ENCODE measurements at regions of chr4 and their contacts with region 1.

Region 1: GRCh38 chr4:141759796-141760425 is 123.5 kb downstream of the IL15 start:
- DNase-seq: peak; percentile 67
- H3K4me3 ChIP-seq: no peak overlapping the region
- H3K27ac ChIP-seq: peak overlapping the region; percentile 81
- H3K4me1 ChIP-seq: peaks cover 36% of the 10 kb centered on the region
- H3K27me3 ChIP-seq: no peaks in the 10 kb centered on the region
- CTCF ChIP-seq: no peak
- POLR2A ChIP-seq: no peak

Region 2: DNA sequence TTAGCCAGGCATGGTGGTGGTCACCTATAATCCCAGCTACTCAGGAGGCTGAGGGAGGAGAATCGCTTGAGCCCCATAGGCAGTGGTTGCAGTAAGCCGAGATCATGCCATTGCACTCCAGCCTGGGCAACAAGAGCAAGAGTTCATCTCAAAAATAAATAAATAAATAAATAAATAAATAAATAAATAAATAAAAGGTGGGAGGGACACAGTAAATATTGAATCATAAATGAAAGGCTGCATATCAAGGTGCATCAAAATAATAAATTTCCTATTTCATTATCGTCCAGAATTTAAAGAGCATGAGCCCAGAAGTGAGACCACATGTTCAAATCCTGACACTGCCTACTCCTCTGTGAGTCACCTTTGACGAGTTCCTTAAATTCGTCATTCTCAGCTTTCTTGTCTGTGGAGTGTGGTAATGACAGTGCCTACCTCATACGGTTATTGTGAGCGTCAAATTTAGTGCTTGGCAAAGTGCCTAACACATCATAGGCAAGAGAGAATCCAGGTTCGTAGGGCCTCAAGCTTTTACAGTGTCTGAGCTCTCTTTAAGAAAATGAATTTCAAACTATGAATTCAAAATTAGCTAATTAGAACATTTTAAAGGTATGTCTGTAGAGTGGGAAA is 73.7 kb before region 1 on chr4:
- CTCF ChIA-PET with region 1: no interaction called
- POLR2A ChIA-PET with region 1: no interaction called
- dilution Hi-C with region 1: no loop called
- intact Hi-C with region 1: loop called (anchors 5 kb)
- DNase-seq: peak; percentile 70
- H3K4me3 ChIP-seq: no peak overlapping the region
- H3K27ac ChIP-seq: peak overlapping the region; percentile 57
- H3K4me1 ChIP-seq: peaks cover 23% of the 10 kb centered on the region
- H3K27me3 ChIP-seq: no peaks in the 10 kb centered on the region
- CTCF ChIP-seq: no peak
- POLR2A ChIP-seq: no peak

Region 3: DNA sequence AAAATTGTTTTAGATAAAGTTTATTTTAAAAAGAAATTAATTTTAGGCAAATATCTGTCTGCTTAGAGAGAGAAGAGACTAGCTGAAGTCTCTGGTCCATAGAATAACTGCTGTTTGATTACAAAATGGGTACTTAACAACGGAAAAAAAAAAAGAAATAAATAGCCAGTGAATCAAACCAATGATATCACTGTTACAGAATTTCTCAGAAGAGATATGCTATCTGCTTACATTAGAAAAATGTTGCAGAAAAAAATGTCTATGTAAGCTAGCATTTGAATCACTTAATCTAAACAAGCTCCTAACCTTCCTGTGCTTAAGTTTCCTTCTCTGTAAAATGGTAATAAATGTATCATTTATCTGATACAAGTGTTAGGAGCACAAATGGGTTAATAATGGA is 66.3 kb after region 1 on chr4:
- CTCF ChIA-PET with region 1: interaction called, 8 read pairs
- POLR2A ChIA-PET with region 1: no interaction called
- dilution Hi-C with region 1: no loop called
- intact Hi-C with region 1: loop called (anchors 1 kb)
- DNase-seq: peak; percentile 45
- H3K4me3 ChIP-seq: no peak overlapping the region
- H3K27ac ChIP-seq: peak overlapping the region; percentile 68
- H3K4me1 ChIP-seq: peaks cover 19% of the 10 kb centered on the region
- H3K27me3 ChIP-seq: no peaks in the 10 kb centered on the region
- CTCF ChIP-seq: no peak
- POLR2A ChIP-seq: no peak

Region 4: GRCh38 chr4:142016031-142016430 is 256.1 kb after region 1 on chr4:
- CTCF ChIA-PET with region 1: no interaction called
- POLR2A ChIA-PET with region 1: no interaction called
- dilution Hi-C with region 1: no loop called
- intact Hi-C with region 1: loop called (anchors 1 kb)
- DNase-seq: no peak
- H3K4me3 ChIP-seq: no peak overlapping the region
- H3K27ac ChIP-seq: no peak overlapping the region
- H3K4me1 ChIP-seq: peaks cover 7% of the 10 kb centered on the region
- H3K27me3 ChIP-seq: no peaks in the 10 kb centered on the region
- CTCF ChIP-seq: no peak
- POLR2A ChIP-seq: no peak

Region 5: DNA sequence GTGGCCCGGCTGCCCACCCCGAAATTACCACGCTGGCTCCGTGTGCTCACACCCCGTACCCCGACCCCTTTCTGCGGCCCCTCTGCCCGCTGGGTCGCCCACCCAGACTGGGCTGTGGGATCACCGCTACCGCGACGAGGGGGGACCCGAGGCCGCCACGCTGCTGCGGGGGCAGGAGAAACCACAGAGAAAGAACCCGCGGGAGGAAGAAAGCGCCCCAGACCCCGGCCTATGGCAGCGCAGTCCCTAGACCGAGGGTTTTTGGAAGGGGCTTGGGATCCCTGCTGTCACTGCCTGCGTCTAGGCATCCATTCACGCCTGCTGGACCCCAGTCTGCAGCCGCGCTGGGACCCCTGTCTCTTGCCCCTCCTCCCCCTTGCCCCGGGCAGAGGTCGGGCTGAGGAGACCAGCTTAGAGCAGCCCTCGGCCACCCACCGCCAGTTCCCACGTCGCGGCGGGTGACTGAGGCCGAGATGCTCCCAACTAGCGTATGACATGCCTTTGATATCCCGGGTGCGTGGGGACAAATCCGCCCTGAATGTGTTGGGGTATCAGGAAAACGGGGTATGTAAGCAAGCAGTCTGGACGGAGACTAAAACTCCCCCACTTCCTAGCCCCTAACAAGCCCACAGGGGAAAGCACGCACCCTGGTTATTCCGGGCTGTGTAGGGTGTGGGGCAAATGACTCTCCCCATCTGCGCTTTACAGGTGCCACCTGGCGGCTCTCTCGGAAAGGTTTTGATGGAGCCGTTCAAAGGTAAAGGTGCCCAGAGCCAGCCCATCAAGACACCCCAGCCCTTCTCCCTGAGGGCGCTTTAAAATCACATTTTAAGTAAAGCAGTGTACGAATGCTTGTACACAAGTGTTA is 1087.1 kb after region 1 on chr4:
- CTCF ChIA-PET with region 1: no interaction called
- POLR2A ChIA-PET with region 1: no interaction called
- dilution Hi-C with region 1: no loop called
- intact Hi-C with region 1: loop called (anchors 5 kb)
- DNase-seq: peak; percentile 18
- H3K4me3 ChIP-seq: peak overlapping the region; percentile 42 to 68 (median 61)
- H3K27ac ChIP-seq: no peak overlapping the region
- H3K4me1 ChIP-seq: no peaks in the 10 kb centered on the region
- H3K27me3 ChIP-seq: peaks cover 14 to 21% of the 10 kb centered on the region in 2 experiments
- CTCF ChIP-seq: peak in 1 of 2 donors; percentile 22
- POLR2A ChIP-seq: no peak

Measured in endothelial cell of umbilical vein (primary cell).